Activated CD4-positive, alpha-beta memory T cell treated with anti-CD3 and anti-CD28 coated beads for 36 hours (primary cell): ENCODE measurements at regions of chr4 and their contacts with region 1.

Region 1: DNA sequence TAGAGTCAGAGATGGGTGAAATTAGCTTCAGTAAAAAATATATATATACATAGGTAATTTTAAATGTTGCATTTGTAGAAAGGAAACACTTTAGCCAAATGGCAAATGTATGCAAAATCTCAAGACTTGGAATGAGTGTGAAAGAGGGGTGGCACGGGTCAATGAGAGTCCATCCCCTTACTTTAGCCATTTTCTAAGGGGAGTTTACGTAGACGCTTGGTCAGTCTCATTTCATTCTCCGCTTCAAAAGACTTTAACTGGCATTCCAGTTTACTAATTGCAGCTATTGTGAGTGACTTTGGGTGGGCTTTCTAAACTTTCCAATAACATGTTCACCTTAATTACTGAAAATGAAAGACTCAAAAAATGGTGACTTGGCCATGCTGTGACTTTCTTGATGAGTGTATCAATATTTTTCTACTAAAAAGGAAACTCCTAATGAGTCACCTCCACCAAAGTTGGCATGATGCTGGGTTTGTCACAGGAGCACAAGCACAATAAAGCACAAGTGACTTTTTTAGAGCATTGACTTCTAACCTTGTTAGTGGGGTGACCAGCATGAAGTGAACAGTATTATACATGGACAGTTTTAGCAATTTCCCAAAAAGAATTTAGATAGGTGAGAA is 356.0 kb upstream of the RASGEF1B start:
- DNase-seq: peak; percentile 49
- H3K4me3 Mint-ChIP-seq: no peak overlapping the region
- H3K27ac Mint-ChIP-seq: peak overlapping the region; percentile 16
- H3K4me1 Mint-ChIP-seq: peaks cover 15% of the 10 kb centered on the region
- H3K27me3 Mint-ChIP-seq: peaks cover 7% of the 10 kb centered on the region

Region 2: GRCh38 chr4:81724925-81725329 is 102.8 kb before region 1 on chr4:
- CTCF ChIA-PET with region 1: no interaction called
- POLR2A ChIA-PET with region 1: no interaction called
- intact Hi-C with region 1: loop called (anchors 10 kb)
- DNase-seq: peak; percentile 80
- H3K4me3 Mint-ChIP-seq: no peak overlapping the region
- H3K27ac Mint-ChIP-seq: no peak overlapping the region
- H3K4me1 Mint-ChIP-seq: peaks cover 16% of the 10 kb centered on the region
- H3K27me3 Mint-ChIP-seq: peaks cover 4% of the 10 kb centered on the region

Region 3: DNA sequence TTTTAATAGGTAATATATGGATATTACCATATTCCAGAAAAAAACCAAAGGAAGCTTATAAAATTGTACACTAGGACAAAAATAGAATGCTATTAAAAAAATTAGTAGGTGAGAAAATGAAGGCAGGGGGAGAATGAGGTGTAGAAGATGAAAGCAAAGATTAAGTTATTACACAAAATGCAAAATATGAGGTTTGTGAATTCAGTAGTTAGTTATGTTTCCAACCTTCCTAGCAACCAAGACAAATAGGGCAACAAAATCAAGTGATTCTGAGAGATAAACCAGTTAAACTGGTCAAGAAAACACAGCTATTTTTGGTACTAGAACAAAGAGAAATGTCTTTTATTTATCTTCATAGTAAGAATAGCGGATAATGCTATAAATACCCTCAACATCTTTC is 56.0 kb before region 1 on chr4:
- CTCF ChIA-PET with region 1: no interaction called
- POLR2A ChIA-PET with region 1: no interaction called
- intact Hi-C with region 1: no loop called
- DNase-seq: no peak
- H3K4me3 Mint-ChIP-seq: no peak overlapping the region
- H3K27ac Mint-ChIP-seq: no peak overlapping the region
- H3K4me1 Mint-ChIP-seq: no peaks in the 10 kb centered on the region
- H3K27me3 Mint-ChIP-seq: peaks cover 7% of the 10 kb centered on the region

Region 4: DNA sequence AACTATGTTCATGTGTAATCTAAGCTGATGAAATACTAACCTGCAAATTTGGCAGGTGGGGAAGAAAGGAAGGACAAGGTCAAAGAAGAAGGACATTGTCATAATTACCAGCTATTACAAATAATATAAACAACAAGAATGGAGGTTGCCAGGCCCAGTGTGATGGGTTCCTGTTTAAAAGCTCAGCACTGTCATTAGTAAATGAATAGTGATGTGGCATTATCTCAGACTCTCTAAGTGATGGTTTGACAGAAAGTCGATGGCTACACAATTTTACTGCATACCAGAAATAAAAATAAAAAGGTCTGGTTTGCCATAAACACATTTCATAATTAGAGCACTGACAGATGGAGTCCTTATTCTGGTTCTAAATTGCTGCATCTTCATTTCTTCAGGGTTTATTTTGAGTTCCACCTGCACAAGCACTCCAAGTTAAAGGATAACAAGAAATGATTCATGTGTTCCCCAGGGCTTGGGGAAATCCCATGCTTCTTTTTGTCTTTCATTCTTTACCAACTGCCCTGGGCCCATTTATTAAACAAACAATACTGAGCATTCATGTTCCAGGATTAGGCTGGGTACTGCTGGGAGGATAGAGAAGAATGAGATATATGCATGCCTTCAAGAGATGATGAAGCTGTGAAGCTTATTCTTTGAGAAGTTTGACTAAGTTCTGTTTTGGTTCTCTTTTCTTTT is 11.8 kb after region 1 on chr4:
- CTCF ChIA-PET with region 1: interaction called, 6 read pairs
- POLR2A ChIA-PET with region 1: interaction called, 4 read pairs
- intact Hi-C with region 1: loop called (anchors 1 kb)
- DNase-seq: no peak
- H3K4me3 Mint-ChIP-seq: no peak overlapping the region
- H3K27ac Mint-ChIP-seq: no peak overlapping the region
- H3K4me1 Mint-ChIP-seq: peaks cover 20% of the 10 kb centered on the region
- H3K27me3 Mint-ChIP-seq: no peaks in the 10 kb centered on the region

Region 5: DNA sequence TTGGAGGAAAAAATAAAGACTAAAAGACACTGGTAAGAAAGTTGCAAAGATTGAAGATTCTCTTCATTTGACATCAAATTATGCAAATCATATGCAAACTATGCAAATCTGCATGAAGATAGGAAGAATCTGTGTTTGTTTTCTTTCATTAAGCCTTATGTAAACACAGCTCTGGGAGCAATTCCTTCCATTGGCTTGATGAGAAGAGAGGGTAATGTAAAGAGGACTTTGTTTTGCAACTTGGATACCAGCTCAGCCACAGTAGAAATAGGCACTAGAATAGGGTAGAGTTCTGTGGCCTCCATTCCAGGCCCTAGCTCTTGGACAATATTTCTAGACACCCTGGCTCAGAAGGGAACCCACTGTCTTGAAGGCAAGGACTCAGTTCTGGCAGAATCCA is 32.4 kb after region 1 on chr4:
- CTCF ChIA-PET with region 1: no interaction called
- POLR2A ChIA-PET with region 1: no interaction called
- intact Hi-C with region 1: no loop called
- DNase-seq: no peak
- H3K4me3 Mint-ChIP-seq: no peak overlapping the region
- H3K27ac Mint-ChIP-seq: no peak overlapping the region
- H3K4me1 Mint-ChIP-seq: no peaks in the 10 kb centered on the region
- H3K27me3 Mint-ChIP-seq: peaks cover 6% of the 10 kb centered on the region

Region 6: DNA sequence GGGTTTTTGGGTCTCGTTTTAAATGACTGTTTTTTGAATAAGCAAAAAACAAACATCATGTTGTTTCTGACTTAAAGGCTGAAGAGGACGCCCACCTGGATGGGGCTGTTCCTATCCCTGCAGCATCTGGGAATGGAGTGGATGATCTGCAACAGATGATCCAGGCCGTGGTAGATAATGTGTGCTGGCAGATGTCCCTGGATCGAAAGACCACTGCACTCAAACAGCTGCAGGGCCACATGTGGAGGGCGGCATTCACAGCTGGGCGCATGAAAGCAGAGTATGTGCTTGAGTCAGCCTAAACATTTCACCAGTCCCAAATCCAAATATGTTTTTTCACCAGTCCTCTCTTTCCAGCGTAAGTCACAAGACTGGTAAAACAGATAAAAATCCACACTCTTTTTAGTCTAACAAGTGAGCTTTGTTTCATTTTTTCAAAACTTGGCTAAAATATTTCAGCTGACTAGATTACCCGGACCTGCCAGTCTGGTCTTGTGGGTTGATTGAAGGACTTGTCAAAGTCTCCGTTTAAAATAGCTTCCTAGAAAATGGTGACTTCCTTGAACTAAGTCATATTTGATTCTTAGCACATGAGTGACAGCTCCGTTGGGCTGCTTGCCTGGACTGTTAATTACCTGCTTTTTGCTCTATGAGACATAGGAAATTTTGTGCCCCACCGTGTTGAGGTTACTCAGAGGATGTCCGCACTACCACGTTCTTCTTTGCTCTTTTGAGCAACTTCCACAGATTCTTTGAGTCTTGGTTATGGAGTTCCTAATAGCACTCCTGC is 623.5 kb after region 1 on chr4:
- CTCF ChIA-PET with region 1: no interaction called
- POLR2A ChIA-PET with region 1: no interaction called
- intact Hi-C with region 1: no loop called
- DNase-seq: no peak
- H3K4me3 Mint-ChIP-seq: no peak overlapping the region
- H3K27ac Mint-ChIP-seq: peak overlapping the region; percentile 48
- H3K4me1 Mint-ChIP-seq: peaks cover 12% of the 10 kb centered on the region
- H3K27me3 Mint-ChIP-seq: no peaks in the 10 kb centered on the region